ENCODE measurements at regions of chr6 and their contacts with region 1.

Region 1: GRCh38 chr6:157314705-157315321 is 8.5 kb downstream of the TMEM242 start:
- DNase-seq: peak; percentile 58
- ATAC-seq: peak; percentile 80
- H3K4me3 ChIP-seq: no peak overlapping the region
- H3K27ac ChIP-seq: no peak overlapping the region
- H3K4me1 ChIP-seq: peaks cover 5 to 14% of the 10 kb centered on the region in 2 experiments
- H3K27me3 ChIP-seq: no peaks in the 10 kb centered on the region
- CTCF ChIP-seq: peak; percentile 71 to 100 (median 92)
- POLR2A ChIP-seq: no peak
- RAD21 ChIP-seq: peak; percentile 98

Region 2: DNA sequence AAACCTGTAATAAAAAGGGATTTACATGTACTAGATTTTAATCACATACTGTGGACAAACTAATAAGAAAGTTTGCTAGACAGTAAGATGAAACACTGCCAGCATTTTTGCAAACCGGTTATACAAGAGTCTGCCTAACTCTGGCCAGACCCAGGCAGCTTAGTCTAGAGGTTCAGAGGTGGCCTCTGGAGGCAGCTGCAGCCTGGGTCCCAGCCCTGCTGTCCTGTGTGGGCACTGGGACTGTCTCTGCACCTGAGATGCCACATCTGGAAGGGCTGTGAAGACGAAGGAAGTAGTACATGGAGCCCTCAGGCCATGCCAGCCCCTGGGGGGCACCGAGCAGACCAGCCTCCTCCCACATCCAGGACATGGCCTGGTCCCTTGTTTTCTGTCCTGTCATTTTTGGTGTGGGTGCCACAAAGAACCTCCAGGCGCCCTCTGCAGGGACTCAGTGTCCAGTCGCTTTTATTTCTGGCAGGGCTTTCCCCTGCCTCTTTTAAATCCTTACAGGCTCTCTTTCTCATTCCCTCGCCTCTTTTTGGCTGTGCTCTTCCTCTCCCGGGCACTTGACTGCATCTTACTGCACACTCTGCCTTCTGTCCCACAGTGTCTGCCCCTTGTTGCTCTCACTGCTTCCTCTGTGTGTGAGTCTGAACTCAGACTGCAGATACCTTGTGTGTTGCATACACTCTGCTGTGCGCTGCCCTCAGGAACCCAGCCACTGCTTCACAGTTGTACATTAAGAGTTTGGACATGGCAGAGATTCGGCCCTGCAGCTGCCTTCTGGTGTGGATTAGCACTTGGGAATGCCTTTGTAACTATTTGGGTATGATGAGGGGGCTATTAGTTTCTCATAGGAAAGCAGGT is 282.9 kb after region 1 on chr6:
- CTCF ChIA-PET with region 1: interaction called, 15 read pairs
- POLR2A ChIA-PET with region 1: no interaction called
- RAD21 ChIA-PET with region 1: interaction called in 1 of 2 experiments, 6 read pairs
- intact Hi-C with region 1: loop called (anchors 1 kb)
- DNase-seq: peak; percentile 24
- ATAC-seq: peak; percentile 90
- H3K4me3 ChIP-seq: no peak overlapping the region
- H3K27ac ChIP-seq: no peak overlapping the region
- H3K4me1 ChIP-seq: no peaks in the 10 kb centered on the region
- H3K27me3 ChIP-seq: no peaks in the 10 kb centered on the region
- CTCF ChIP-seq: peak; percentile 61 to 94 (median 65)
- POLR2A ChIP-seq: no peak
- RAD21 ChIP-seq: peak; percentile 89

Region 3: GRCh38 chr6:157667211-157668008 is 352.6 kb after region 1 on chr6:
- CTCF ChIA-PET with region 1: interaction called, 33 read pairs
- POLR2A ChIA-PET with region 1: no interaction called
- RAD21 ChIA-PET with region 1: no interaction called
- intact Hi-C with region 1: loop called (anchors 1 kb)
- DNase-seq: peak; percentile 53
- ATAC-seq: peak; percentile 87
- H3K4me3 ChIP-seq: no peak overlapping the region
- H3K27ac ChIP-seq: no peak overlapping the region
- H3K4me1 ChIP-seq: no peaks in the 10 kb centered on the region; a peak in 1 of 4 replicates
- H3K27me3 ChIP-seq: no peaks in the 10 kb centered on the region
- CTCF ChIP-seq: peak; percentile 85 to 95 (median 93)
- POLR2A ChIP-seq: no peak
- RAD21 ChIP-seq: peak; percentile 90

Region 4: GRCh38 chr6:157946865-157947532 is 632.2 kb after region 1 on chr6:
- CTCF ChIA-PET with region 1: no interaction called
- POLR2A ChIA-PET with region 1: no interaction called
- RAD21 ChIA-PET with region 1: no interaction called
- intact Hi-C with region 1: loop called (anchors 10 kb)
- DNase-seq: no peak
- ATAC-seq: peak; percentile 81
- H3K4me3 ChIP-seq: no peak overlapping the region
- H3K27ac ChIP-seq: no peak overlapping the region
- H3K4me1 ChIP-seq: no peaks in the 10 kb centered on the region
- H3K27me3 ChIP-seq: no peaks in the 10 kb centered on the region
- CTCF ChIP-seq: peak; percentile 40 to 57 (median 55); a peak in 5 of 6 replicates
- POLR2A ChIP-seq: no peak
- RAD21 ChIP-seq: peak; percentile 72

Region 5: DNA sequence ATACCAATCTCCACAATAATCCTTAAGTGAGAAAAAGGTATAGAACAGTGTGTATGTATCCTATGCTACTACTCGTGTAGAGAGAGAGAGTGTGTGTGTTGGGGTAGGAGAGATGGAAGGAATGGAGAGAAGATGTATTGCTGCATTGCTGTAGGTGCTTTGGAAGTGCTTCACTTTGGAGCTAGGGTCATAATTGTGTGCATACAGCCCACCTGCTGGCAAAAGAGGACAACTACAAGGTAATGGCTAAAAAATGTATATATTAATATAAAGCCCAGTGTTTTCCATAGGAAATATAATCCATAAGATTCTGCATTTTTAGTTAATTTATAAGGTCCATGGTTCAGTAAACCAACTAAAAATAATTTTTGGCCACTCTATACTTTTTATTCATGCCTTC is 817.1 kb after region 1 on chr6:
- CTCF ChIA-PET with region 1: no interaction called
- POLR2A ChIA-PET with region 1: no interaction called
- RAD21 ChIA-PET with region 1: no interaction called
- intact Hi-C with region 1: loop called (anchors 10 kb)
- DNase-seq: no peak
- ATAC-seq: peak; percentile 85
- H3K4me3 ChIP-seq: no peak overlapping the region
- H3K27ac ChIP-seq: no peak overlapping the region
- H3K4me1 ChIP-seq: no peaks in the 10 kb centered on the region
- H3K27me3 ChIP-seq: no peaks in the 10 kb centered on the region
- CTCF ChIP-seq: peak; percentile 41 to 63 (median 60); a peak in 5 of 6 replicates
- POLR2A ChIP-seq: no peak
- RAD21 ChIP-seq: peak; percentile 64